ENCODE measurements at regions of chr13 and their contacts with region 1.

Region 1: GRCh38 chr13:41132512-41133152 is at the start of gene KBTBD6:
- DNase-seq: peak; percentile 98
- H3K4me3 Mint-ChIP-seq: peak within 1 kb of the TSS; percentile 98
- H3K27ac Mint-ChIP-seq: peak within 1 kb of the TSS; percentile 96
- H3K4me1 Mint-ChIP-seq: peaks cover 43% of the 10 kb centered on the region
- H3K27me3 Mint-ChIP-seq: no peaks in the 10 kb centered on the region
- total RNA-seq, gene KBTBD6: 6.3 and 6.8 TPM in 2 replicates

Region 2: GRCh38 chr13:40922437-40923040 is 210.1 kb before region 1 on chr13:
- intact Hi-C with region 1: loop called (anchors 5 kb)
- DNase-seq: no peak
- H3K4me3 Mint-ChIP-seq: peak overlapping the region; percentile 73
- H3K27ac Mint-ChIP-seq: peak overlapping the region; percentile 80
- H3K4me1 Mint-ChIP-seq: peaks cover 13% of the 10 kb centered on the region
- H3K27me3 Mint-ChIP-seq: no peaks in the 10 kb centered on the region

Region 3: GRCh38 chr13:41193919-41194824 is 61.5 kb after region 1 on chr13 and contains the start of gene KBTBD7:
- intact Hi-C with region 1: loop called (anchors 1 kb)
- DNase-seq: peak; percentile 97
- H3K4me3 Mint-ChIP-seq: peak within 1 kb of the TSS; percentile 90
- H3K27ac Mint-ChIP-seq: peak within 1 kb of the TSS; percentile 95
- H3K4me1 Mint-ChIP-seq: peaks cover 40% of the 10 kb centered on the region
- H3K27me3 Mint-ChIP-seq: no peaks in the 10 kb centered on the region
- total RNA-seq, gene KBTBD7: 5.6 and 6.2 TPM in 2 replicates

Region 4: GRCh38 chr13:41263261-41264027 is 130.8 kb after region 1 on chr13 and contains the start of gene MTRF1:
- intact Hi-C with region 1: loop called (anchors 1 kb)
- DNase-seq: peak; percentile 94
- H3K4me3 Mint-ChIP-seq: peak within 1 kb of the TSS; percentile 98
- H3K27ac Mint-ChIP-seq: peak within 1 kb of the TSS; percentile 100
- H3K4me1 Mint-ChIP-seq: peaks cover 8% of the 10 kb centered on the region
- H3K27me3 Mint-ChIP-seq: no peaks in the 10 kb centered on the region
- total RNA-seq, gene MTRF1: 20.1 and 20.6 TPM in 2 replicates

Region 5: DNA sequence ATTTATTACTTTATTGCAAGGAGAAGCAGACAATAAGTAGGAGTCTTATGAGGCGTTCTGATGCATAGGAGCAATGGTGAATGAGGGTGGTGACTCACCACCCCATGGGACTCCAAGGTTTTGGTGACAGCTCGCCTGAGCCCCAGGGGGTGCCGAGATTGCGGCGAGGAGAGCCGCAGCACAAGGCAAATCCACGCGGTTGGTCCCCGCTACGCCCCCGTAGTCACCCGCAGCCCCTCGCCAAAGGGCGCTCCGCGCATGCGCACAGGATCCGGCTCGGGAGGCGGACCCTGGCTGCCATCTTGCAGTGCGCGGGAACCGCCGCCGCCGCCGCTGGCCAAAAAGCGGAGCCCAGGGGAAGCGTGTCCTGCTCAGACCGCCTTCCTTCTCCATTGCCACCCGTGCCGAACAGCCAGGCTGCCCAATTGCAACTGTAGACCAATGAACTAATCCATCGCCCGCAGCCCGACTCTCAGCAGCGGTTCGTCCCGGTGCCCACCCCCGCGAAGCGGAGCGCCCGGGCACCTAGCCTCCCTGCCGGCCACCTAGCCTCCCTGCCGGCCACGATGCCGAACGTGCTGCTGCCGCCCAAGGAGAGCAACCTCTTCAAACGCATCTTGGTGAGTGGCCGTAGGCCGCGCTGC is 178.5 kb after region 1 on chr13 and contains the start of gene NAA16:
- intact Hi-C with region 1: loop called (anchors 2 kb)
- DNase-seq: peak; percentile 98
- H3K4me3 Mint-ChIP-seq: peak within 1 kb of the TSS; percentile 94
- H3K27ac Mint-ChIP-seq: peak within 1 kb of the TSS; percentile 93
- H3K4me1 Mint-ChIP-seq: peaks cover 37% of the 10 kb centered on the region
- H3K27me3 Mint-ChIP-seq: no peaks in the 10 kb centered on the region
- total RNA-seq, gene NAA16: 30.3 and 31.2 TPM in 2 replicates

Region 6: DNA sequence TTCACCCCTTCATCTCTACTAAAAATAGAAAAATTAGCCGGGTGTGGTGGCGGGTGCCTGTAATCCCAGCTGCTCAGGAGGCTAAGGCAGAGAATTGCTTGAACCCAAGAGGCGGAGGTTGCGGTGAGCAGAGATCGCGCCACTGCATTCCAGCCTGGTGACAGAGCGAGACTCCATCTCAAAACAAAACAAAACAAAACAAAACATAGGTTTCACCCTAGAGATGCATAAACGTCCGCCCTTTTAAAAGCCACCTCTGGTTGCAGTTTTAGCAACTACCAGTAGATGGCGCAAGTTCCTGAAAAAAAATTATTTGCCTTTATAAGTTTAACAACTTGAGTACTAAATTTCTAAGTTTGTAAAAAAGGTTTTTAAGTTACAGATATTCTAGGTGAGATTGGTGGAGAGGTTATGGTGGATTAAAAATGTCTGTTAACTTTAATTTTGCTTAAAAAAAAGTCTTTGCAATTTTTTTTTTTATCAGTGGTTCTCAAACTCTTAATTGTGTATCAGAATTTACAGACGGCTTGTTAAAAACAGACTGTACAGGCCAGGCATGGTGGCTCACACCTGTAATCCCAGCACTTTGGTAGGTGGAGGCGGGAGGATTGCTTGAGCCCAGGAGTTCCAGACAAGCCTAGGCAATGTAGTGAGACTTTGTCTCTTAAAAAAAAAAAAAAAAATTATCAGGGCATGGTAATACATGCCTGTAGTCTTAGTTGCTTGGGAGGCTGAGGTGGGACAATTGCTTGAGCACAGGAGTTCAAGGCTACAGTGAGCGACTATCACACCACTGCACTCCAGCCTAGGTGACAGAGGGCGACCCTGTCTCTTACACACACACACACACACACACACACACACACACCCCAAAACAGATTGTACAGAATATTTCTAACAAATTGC is 220.6 kb after region 1 on chr13:
- intact Hi-C with region 1: loop called (anchors 2 kb)
- DNase-seq: peak; percentile 89
- H3K4me3 Mint-ChIP-seq: no peak overlapping the region
- H3K27ac Mint-ChIP-seq: peak overlapping the region; percentile 81
- H3K4me1 Mint-ChIP-seq: peaks cover 34% of the 10 kb centered on the region
- H3K27me3 Mint-ChIP-seq: no peaks in the 10 kb centered on the region

Measured in activated CD4-positive, alpha-beta T cell treated with anti-CD3 and anti-CD28 coated beads, Interleukin-2, amount 10 ng/mL, durations not matched to agents 24 days and 14 days (primary cell).